ENCODE measurements at regions of chr3 and their contacts with region 1.

Region 1: GRCh38 chr3:100316641-100317069 is 17.9 kb upstream of the NIT2 start:
- DNase-seq: peak; percentile 60
- ATAC-seq: peak; percentile 69
- H3K4me3 Mint-ChIP-seq: peak overlapping the region; percentile 18
- H3K27ac Mint-ChIP-seq: peak overlapping the region; percentile 70
- H3K4me1 Mint-ChIP-seq: peaks cover 18% of the 10 kb centered on the region
- H3K27me3 Mint-ChIP-seq: no peaks in the 10 kb centered on the region

Region 2: GRCh38 chr3:100334488-100335351 is 18.1 kb after region 1 on chr3 and contains the start of gene NIT2:
- CTCF ChIA-PET with region 1: interaction called, 18 read pairs
- DNase-seq: peak; percentile 88
- ATAC-seq: peak; percentile 99
- H3K4me3 Mint-ChIP-seq: peak within 1 kb of the TSS; percentile 87
- H3K27ac Mint-ChIP-seq: peak within 1 kb of the TSS; percentile 89
- H3K4me1 Mint-ChIP-seq: peaks cover 20% of the 10 kb centered on the region
- H3K27me3 Mint-ChIP-seq: no peaks in the 10 kb centered on the region
- total RNA-seq, gene NIT2: 45.5 to 59.8 TPM

Region 3: GRCh38 chr3:100400780-100401673 is 84.4 kb after region 1 on chr3 and contains the starts of genes LNP1 and TOMM70:
- CTCF ChIA-PET with region 1: interaction called, 10 read pairs
- DNase-seq: peak; percentile 98
- ATAC-seq: peak; percentile 90
- H3K4me3 Mint-ChIP-seq: peak within 1 kb of the TSS; percentile 85
- H3K27ac Mint-ChIP-seq: peak within 1 kb of the TSS; percentile 94
- H3K4me1 Mint-ChIP-seq: peaks cover 58% of the 10 kb centered on the region
- H3K27me3 Mint-ChIP-seq: no peaks in the 10 kb centered on the region
- total RNA-seq, gene LNP1: 2.3 to 2.6 TPM
- total RNA-seq, gene TOMM70: 38.9 to 46.9 TPM

Region 4: GRCh38 chr3:100463002-100463401 is 146.3 kb after region 1 on chr3:
- CTCF ChIA-PET with region 1: interaction called, 14 read pairs
- DNase-seq: no peak
- ATAC-seq: peak; percentile 83
- H3K4me3 Mint-ChIP-seq: no peak overlapping the region
- H3K27ac Mint-ChIP-seq: no peak overlapping the region
- H3K4me1 Mint-ChIP-seq: peaks cover 16% of the 10 kb centered on the region
- H3K27me3 Mint-ChIP-seq: no peaks in the 10 kb centered on the region

Region 5: GRCh38 chr3:100590114-100590839 is 273.6 kb after region 1 on chr3:
- CTCF ChIA-PET with region 1: interaction called, 15 read pairs
- DNase-seq: peak; percentile 68
- ATAC-seq: peak; percentile 86
- H3K4me3 Mint-ChIP-seq: peak overlapping the region; percentile 19
- H3K27ac Mint-ChIP-seq: no peak overlapping the region
- H3K4me1 Mint-ChIP-seq: peaks cover 4% of the 10 kb centered on the region
- H3K27me3 Mint-ChIP-seq: peaks cover 3% of the 10 kb centered on the region

Measured in activated CD8-positive, alpha-beta memory T cell treated with anti-CD3 and anti-CD28 coated beads, Interleukin-2, amount 10 ng/mL, durations not matched to agents 7 days and 5 days (primary cell).